A673 (cell line): ENCODE measurements at regions of chr2 and their contacts with region 1.

Region 1: GRCh38 chr2:72097276-72097675 is 50.4 kb downstream of the CYP26B1 start:
- DNase-seq: no peak
- H3K4me3 ChIP-seq: no peak overlapping the region
- H3K27ac ChIP-seq: no peak overlapping the region
- H3K4me1 ChIP-seq: no peaks in the 10 kb centered on the region
- H3K27me3 ChIP-seq: peaks cover 5% of the 10 kb centered on the region
- CTCF ChIP-seq: no peak

Region 2: GRCh38 chr2:71974846-71975245 is 122.4 kb before region 1 on chr2:
- CTCF ChIA-PET with region 1: no interaction called
- POLR2A ChIA-PET with region 1: interaction called, 13 read pairs
- intact Hi-C with region 1: no loop called
- DNase-seq: no peak
- H3K4me3 ChIP-seq: no peak overlapping the region
- H3K27ac ChIP-seq: no peak overlapping the region
- H3K4me1 ChIP-seq: no peaks in the 10 kb centered on the region
- H3K27me3 ChIP-seq: peaks cover 50% of the 10 kb centered on the region
- CTCF ChIP-seq: no peak